ENCODE measurements at regions of chr9 and their contacts with region 1.

Region 1: DNA sequence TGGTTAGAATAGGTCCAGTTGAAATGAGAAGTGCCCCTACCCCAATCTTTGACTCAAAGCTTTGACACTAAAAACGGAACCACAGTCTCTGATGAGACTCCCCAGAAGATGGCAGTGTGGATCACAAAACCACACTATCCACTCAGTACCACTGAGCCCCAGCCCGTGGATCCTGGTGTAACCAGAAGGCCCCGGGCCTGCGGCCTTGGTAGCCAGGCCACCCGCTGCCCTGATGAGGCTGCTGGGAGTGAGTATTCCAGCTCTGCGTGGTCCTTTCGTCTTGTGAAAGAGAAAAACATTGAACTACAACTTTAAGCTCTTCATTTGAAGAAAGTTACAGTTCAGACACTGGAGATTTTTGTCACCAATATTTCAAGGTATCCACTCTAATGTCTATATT is 42.2 kb upstream of the FBP1 start:
- DNase-seq: peak; percentile 22
- ATAC-seq: peak; percentile 79
- H3K4me3 Mint-ChIP-seq: no peak overlapping the region
- H3K27ac Mint-ChIP-seq: no peak overlapping the region
- H3K4me1 Mint-ChIP-seq: no peaks in the 10 kb centered on the region
- H3K27me3 Mint-ChIP-seq: peaks cover 6% of the 10 kb centered on the region
- CTCF ChIP-seq: no peak

Region 2: GRCh38 chr9:94917840-94918753 is 236.6 kb after region 1 on chr9:
- CTCF ChIA-PET with region 1: interaction called, 22 read pairs
- POLR2A ChIA-PET with region 1: no interaction called
- intact Hi-C with region 1: no loop called
- DNase-seq: no peak
- ATAC-seq: peak; percentile 78
- H3K4me3 Mint-ChIP-seq: no peak overlapping the region
- H3K27ac Mint-ChIP-seq: no peak overlapping the region
- H3K4me1 Mint-ChIP-seq: peaks cover 3% of the 10 kb centered on the region
- H3K27me3 Mint-ChIP-seq: no peaks in the 10 kb centered on the region
- CTCF ChIP-seq: no peak

Region 3: DNA sequence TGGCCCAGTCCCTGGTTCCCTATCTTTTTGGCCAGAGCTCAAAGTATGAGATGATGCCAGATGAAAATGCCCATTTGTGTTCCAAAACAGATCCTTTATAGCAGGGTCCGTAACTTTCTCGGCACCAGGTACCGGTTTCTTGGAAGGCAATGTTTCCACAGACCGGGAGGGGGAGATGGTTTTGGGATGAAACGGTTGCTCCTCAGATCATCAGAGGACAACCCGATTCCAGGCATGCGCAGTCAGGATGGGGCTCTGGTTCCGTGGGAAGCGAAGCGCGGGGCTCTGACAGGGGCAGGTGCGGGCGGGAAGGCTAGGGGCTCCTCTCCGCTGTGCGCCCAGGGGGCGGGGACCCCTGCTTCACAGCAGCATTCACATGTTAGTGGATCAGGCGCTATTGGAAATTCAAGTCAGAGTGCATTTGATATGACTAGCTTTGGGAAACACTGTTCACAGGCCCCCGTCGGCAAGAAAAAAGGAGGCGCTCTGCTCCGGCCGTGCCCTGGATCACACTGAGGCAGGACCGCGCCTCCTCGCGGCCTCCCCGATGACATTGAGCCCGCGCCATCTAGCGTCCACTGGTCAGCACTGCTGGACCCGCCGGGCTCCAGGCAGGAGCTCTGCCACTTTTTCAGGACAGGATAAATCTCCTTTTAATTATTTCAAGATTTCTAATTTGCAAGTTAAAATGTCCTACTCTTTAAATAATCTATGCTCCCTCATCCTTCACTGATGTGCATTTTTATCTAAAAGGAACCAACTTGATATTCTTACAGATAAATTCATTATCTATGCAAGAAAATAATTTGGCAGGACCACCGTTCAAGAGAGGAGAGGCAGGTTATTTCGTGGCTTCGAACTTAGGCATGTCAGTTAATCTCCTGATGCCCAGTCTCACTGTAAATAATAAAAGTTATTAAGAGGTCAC is 446.0 kb after region 1 on chr9:
- CTCF ChIA-PET with region 1: interaction called, 220 read pairs
- POLR2A ChIA-PET with region 1: no interaction called
- intact Hi-C with region 1: loop called (anchors 1 kb)
- DNase-seq: peak; percentile 48
- ATAC-seq: peak; percentile 86
- H3K4me3 Mint-ChIP-seq: no peak overlapping the region
- H3K27ac Mint-ChIP-seq: no peak overlapping the region
- H3K4me1 Mint-ChIP-seq: peaks cover 4% of the 10 kb centered on the region
- H3K27me3 Mint-ChIP-seq: no peaks in the 10 kb centered on the region
- CTCF ChIP-seq: peak; percentile 21

Region 4: GRCh38 chr9:95167998-95168397 is 486.5 kb after region 1 on chr9:
- CTCF ChIA-PET with region 1: interaction called, 20 read pairs
- POLR2A ChIA-PET with region 1: no interaction called
- intact Hi-C with region 1: loop called (anchors 1 kb)
- DNase-seq: no peak
- ATAC-seq: no peak
- H3K4me3 Mint-ChIP-seq: no peak overlapping the region
- H3K27ac Mint-ChIP-seq: no peak overlapping the region
- H3K4me1 Mint-ChIP-seq: no peaks in the 10 kb centered on the region
- H3K27me3 Mint-ChIP-seq: no peaks in the 10 kb centered on the region
- CTCF ChIP-seq: peak; percentile 65

Region 5: GRCh38 chr9:95175523-95175922 is 494.0 kb after region 1 on chr9:
- CTCF ChIA-PET with region 1: interaction called, 8 read pairs
- POLR2A ChIA-PET with region 1: no interaction called
- intact Hi-C with region 1: loop called (anchors 2 kb)
- DNase-seq: no peak
- ATAC-seq: no peak
- H3K4me3 Mint-ChIP-seq: no peak overlapping the region
- H3K27ac Mint-ChIP-seq: no peak overlapping the region
- H3K4me1 Mint-ChIP-seq: no peaks in the 10 kb centered on the region
- H3K27me3 Mint-ChIP-seq: no peaks in the 10 kb centered on the region
- CTCF ChIP-seq: no peak

Region 6: DNA sequence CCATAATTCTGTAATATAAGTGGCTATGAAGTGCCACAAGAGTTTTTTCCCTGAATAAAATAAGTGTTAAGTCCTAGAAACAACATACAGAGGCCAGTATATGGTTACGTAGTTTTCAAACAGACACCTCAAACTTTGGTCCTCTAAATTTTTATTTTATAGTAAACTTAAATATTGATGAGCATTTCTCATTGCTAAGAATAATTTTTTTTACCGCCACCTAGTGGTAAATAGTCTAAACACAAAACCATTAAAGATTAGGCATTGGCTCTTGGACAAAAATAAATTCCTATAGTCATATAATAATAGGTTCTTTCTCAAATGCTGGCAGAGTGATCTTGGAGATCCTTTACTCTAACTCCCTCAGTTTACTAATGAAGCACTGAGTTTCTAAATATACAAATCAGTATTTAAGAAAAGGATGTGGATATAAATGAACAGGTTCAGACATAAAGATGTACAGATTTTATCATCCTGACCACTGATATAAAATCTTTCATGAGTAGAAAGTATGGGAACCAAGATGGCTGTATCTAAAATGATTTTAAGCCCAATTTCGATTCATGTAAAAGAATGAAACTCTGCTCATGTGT is 499.8 kb after region 1 on chr9:
- CTCF ChIA-PET with region 1: interaction called, 8 read pairs
- POLR2A ChIA-PET with region 1: no interaction called
- intact Hi-C with region 1: loop called (anchors 1 kb)
- DNase-seq: no peak
- ATAC-seq: no peak
- H3K4me3 Mint-ChIP-seq: no peak overlapping the region
- H3K27ac Mint-ChIP-seq: no peak overlapping the region
- H3K4me1 Mint-ChIP-seq: no peaks in the 10 kb centered on the region
- H3K27me3 Mint-ChIP-seq: no peaks in the 10 kb centered on the region
- CTCF ChIP-seq: peak; percentile 50

Region 7: DNA sequence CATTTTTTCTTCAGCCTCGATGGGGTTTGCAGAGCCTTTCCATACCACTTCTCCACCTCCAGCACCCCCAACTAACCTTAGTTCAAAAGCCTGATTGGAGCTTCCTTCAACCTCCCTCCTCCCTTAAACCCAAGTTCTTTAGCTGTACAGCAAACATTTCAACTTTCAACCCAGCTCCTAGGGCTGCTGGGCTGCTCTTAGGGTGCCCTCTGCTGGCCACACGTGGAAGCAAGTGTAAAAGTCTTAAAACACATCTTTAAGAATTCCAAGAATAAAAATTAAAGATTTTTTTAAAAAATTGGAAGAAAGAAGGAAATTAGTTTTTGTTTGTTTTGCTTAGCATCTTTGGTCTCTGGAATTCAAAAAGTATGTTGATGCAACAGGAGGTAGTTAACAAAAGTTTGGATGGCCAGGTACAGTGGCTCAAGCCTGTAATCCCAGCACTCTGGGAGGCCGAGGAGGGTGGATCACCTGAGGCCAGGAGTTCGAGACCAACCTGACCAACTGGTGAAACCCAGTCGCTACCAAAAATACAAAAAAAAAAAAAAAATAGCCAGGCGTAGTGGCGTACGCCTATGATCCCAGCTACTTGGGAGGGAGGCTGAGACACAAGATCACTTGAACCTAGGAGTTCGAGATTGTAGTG is 1636.0 kb after region 1 on chr9:
- CTCF ChIA-PET with region 1: interaction called, 7 read pairs
- POLR2A ChIA-PET with region 1: no interaction called
- intact Hi-C with region 1: loop called (anchors 2 kb)
- DNase-seq: peak; percentile 25
- ATAC-seq: no peak
- H3K4me3 Mint-ChIP-seq: no peak overlapping the region
- H3K27ac Mint-ChIP-seq: no peak overlapping the region
- H3K4me1 Mint-ChIP-seq: no peaks in the 10 kb centered on the region
- H3K27me3 Mint-ChIP-seq: peaks cover 4% of the 10 kb centered on the region
- CTCF ChIP-seq: peak; percentile 98